ENCODE measurements at regions of chr2 and their contacts with region 1.

Region 1: GRCh38 chr2:20097879-20098714 is 46.7 kb upstream of the LAPTM4A start:
- DNase-seq: peak; percentile 62 to 85 (median 80)
- H3K4me3 ChIP-seq: peak overlapping the region in 6 of 59 donors; percentile 0 to 15 (median 6)
- H3K27ac ChIP-seq: no peak overlapping the region
- H3K27me3 ChIP-seq: peaks cover 0 to 4% (median 0%) of the 10 kb centered on the region in 45 donors
- CTCF ChIP-seq: peak; percentile 40 to 96 (median 85)

Region 2: GRCh38 chr2:19955544-19956422 is 142.3 kb before region 1 on chr2:
- intact Hi-C with region 1: loop called (anchors 2 to 5 kb)
- DNase-seq: peak in 8 of 10 donors; percentile 20 to 53 (median 40)
- H3K4me3 ChIP-seq: no peak overlapping the region
- H3K27ac ChIP-seq: no peak overlapping the region
- H3K27me3 ChIP-seq: no peaks in the 10 kb centered on the region
- CTCF ChIP-seq: peak; percentile 49 to 96 (median 80)

Region 3: DNA sequence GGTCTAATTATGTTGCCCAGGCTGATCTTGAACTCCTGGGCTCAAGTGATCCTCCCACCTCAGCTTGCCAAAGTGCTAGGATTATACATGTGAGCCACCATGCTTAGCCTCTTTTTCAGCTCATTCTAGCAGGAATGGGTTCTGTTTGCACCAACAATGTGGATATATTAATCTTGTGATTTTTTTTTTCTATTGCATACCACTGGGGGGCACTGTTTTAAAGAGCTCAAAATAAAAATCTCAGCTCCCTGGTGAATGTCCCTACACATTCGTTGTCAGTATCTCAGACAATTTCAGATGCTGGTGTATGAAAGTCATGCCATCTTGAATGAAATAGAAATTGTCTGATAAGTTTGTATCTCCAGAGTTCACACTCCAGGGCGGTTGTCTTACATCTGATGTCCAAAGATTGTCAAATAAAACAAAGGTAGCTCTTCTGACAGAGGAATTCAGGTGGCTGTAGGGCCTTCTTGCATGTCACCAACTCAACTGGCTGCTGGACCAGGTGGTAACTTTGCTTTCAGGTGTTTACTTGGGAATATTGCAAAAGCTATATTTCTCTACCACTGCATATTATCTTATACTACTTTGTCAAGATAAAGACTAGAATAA is 82.5 kb before region 1 on chr2:
- intact Hi-C with region 1: loop called (anchors 2 to 5 kb)
- DNase-seq: no peak
- H3K4me3 ChIP-seq: no peak overlapping the region
- H3K27ac ChIP-seq: no peak overlapping the region
- H3K27me3 ChIP-seq: peaks cover 0 to 25% (median 6%) of the 10 kb centered on the region in 45 donors
- CTCF ChIP-seq: peak; percentile 48 to 80 (median 69)